Caco-2 (cell line): ENCODE measurements at regions of chr3 and their contacts with region 1.

Region 1: GRCh38 chr3:126991366-126992200 is 8.7 kb downstream of the PLXNA1 start:
- DNase-seq: no peak
- H3K4me3 ChIP-seq: no peak overlapping the region
- H3K4me3 Mint-ChIP-seq: no peak overlapping the region
- H3K27ac Mint-ChIP-seq: no peak overlapping the region
- H3K4me1 ChIP-seq: no peaks in the 10 kb centered on the region
- H3K4me1 Mint-ChIP-seq: no peaks in the 10 kb centered on the region
- H3K27me3 ChIP-seq: no peaks in the 10 kb centered on the region
- H3K27me3 Mint-ChIP-seq: no peaks in the 10 kb centered on the region
- CTCF ChIP-seq: no peak

Region 2: GRCh38 chr3:126979046-126979628 is 12.4 kb before region 1 on chr3:
- CTCF ChIA-PET with region 1: no interaction called
- POLR2A ChIA-PET with region 1: no interaction called
- intact Hi-C with region 1: no loop called
- DNase-seq: no peak
- H3K4me3 ChIP-seq: no peak overlapping the region
- H3K4me3 Mint-ChIP-seq: no peak overlapping the region
- H3K27ac Mint-ChIP-seq: no peak overlapping the region
- H3K4me1 ChIP-seq: peaks cover 7% of the 10 kb centered on the region; the same call in 1 of the 2 replicates
- H3K4me1 Mint-ChIP-seq: peaks cover 7% of the 10 kb centered on the region
- H3K27me3 ChIP-seq: no peaks in the 10 kb centered on the region
- H3K27me3 Mint-ChIP-seq: no peaks in the 10 kb centered on the region
- CTCF ChIP-seq: no peak

Region 3: DNA sequence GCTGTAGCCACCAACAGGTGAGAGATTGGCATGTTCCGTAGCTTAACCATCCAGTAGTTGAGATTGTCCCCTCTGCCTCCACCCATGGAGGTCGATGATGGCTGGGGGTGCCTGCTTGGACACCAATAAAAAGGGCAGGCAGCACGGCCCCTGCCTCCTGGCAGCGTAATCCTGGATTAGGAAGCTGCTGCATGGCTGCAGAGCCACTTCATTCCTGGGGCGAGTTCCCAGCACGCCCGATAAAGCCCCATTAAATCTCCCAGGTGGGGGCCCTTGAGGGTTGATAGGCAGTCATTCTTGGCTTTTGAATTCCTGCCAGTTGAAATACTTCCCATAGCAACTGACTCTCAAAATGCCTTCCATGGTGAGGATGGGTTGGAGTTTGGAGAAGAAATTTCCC is 59.1 kb after region 1 on chr3:
- CTCF ChIA-PET with region 1: interaction called, 12 read pairs
- POLR2A ChIA-PET with region 1: no interaction called
- intact Hi-C with region 1: no loop called
- DNase-seq: no peak
- H3K4me3 ChIP-seq: no peak overlapping the region
- H3K4me3 Mint-ChIP-seq: no peak overlapping the region
- H3K27ac Mint-ChIP-seq: no peak overlapping the region
- H3K4me1 ChIP-seq: no peaks in the 10 kb centered on the region
- H3K4me1 Mint-ChIP-seq: no peaks in the 10 kb centered on the region
- H3K27me3 ChIP-seq: no peaks in the 10 kb centered on the region
- H3K27me3 Mint-ChIP-seq: peaks cover 3% of the 10 kb centered on the region
- CTCF ChIP-seq: no peak

Region 4: DNA sequence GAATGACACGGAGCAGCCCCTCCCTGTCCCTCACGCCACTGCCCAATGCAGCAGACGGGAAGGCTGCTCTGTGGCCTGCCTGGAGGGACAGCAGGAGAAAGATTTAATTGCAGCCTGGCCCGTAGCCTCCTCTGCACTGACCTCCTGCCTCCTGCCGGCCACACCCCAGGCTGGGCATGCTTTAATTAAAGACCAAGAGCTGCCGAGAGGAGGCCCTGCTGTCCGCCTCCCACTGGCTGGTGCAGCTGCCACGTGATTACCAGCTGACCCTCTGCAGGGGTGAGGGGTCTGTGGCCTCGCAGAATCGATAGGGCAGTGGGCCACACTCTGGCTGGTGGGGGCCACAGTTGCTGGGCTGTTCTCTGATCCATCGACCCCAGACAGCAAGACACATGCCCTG is 101.2 kb after region 1 on chr3:
- CTCF ChIA-PET with region 1: no interaction called
- POLR2A ChIA-PET with region 1: no interaction called
- intact Hi-C with region 1: no loop called
- DNase-seq: no peak
- H3K4me3 ChIP-seq: no peak overlapping the region
- H3K4me3 Mint-ChIP-seq: no peak overlapping the region
- H3K27ac Mint-ChIP-seq: no peak overlapping the region
- H3K4me1 ChIP-seq: no peaks in the 10 kb centered on the region
- H3K4me1 Mint-ChIP-seq: peaks cover 5% of the 10 kb centered on the region
- H3K27me3 ChIP-seq: no peaks in the 10 kb centered on the region
- H3K27me3 Mint-ChIP-seq: peaks cover 2% of the 10 kb centered on the region
- CTCF ChIP-seq: no peak